PC-3 (cell line): ENCODE measurements at regions of chr2 and their contacts with region 1.

Region 1: DNA sequence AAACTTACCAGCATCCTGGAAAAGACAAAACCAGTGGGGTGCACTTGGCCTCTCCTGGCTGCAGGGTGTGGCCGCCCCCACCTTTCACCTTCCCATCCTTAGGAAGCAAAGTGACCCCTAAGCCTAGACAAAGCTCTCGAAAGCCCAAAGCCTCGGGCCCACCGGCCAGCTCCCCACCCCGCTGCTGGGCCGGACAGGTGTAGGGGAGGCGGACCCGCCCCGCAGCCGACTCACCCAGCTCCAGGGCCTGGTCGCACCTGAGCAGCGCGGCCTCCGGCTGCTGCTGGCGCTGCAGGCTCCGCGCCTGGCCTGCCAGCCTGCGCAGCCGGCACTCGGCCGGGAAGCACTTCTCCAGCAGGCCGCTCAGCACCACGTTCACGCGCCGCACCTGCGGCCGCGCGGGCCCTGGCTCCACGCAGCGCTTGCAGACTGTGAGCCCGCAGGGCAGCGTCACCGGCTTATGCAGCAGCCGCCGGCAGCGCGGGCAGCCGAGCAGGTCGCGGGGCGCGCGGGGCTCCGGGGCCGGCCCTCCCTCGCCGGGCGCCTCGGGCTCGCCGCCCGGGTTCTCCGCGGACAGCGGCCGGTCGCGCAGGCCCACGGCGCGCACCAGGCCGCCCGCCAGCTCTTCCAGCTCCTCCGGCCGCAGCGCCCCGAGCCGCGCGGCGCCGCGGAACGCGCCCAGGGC is 978 bp downstream of the LONRF2 start:
- DNase-seq: peak; percentile 55
- ATAC-seq: peak; percentile 67
- H3K4me3 ChIP-seq: peak overlapping the region; percentile 68
- H3K27ac ChIP-seq: no peak overlapping the region
- H3K4me1 ChIP-seq: no peaks in the 10 kb centered on the region; the same call in 1 of the 2 replicates
- H3K27me3 ChIP-seq: peaks cover 57% of the 10 kb centered on the region
- CTCF ChIP-seq: peak; percentile 36

Region 2: DNA sequence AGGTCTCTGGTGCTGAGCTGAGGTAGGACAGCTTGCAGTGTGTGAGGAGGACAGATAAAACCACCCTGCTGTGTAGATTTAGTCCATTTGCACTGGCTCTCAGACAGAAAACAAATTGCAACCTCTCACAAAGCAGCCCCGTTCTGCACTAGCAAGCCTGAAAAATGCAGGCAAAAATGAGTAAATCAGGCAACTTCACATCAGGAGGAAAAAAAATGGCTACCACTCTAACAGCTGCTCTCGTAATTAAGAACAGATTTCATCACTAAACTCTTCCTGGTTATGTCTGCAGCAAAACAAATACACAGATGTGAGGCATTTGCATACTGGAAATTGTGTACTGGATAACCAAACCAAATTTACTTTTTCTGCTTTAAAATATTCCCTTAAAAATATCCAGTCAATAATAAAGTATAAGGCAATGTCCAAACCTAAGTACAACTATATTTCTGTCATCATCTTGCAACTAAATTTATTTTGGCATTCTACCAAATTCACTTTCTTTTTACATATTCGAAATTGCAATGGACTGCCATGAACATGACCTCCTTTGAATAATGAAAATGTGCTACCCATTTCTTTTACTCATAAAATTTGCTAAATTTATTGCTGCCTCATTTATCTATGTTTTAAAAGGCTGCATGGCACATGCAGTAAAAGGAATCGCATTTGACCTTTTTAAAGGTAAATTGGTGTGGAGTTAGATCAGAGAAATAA is 336.4 kb before region 1 on chr2:
- CTCF ChIA-PET with region 1: no interaction called
- POLR2A ChIA-PET with region 1: no interaction called
- intact Hi-C with region 1: no loop called
- DNase-seq: no peak
- ATAC-seq: no peak
- H3K4me3 ChIP-seq: no peak overlapping the region
- H3K27ac ChIP-seq: no peak overlapping the region
- H3K4me1 ChIP-seq: no peaks in the 10 kb centered on the region
- H3K27me3 ChIP-seq: no peaks in the 10 kb centered on the region
- CTCF ChIP-seq: no peak

Region 3: GRCh38 chr2:100193291-100193710 is 128.0 kb before region 1 on chr2:
- CTCF ChIA-PET with region 1: no interaction called
- POLR2A ChIA-PET with region 1: no interaction called
- intact Hi-C with region 1: no loop called
- DNase-seq: peak; percentile 86
- ATAC-seq: peak; percentile 72
- H3K4me3 ChIP-seq: no peak overlapping the region
- H3K27ac ChIP-seq: peak overlapping the region; percentile 86
- H3K4me1 ChIP-seq: peaks cover 33% of the 10 kb centered on the region
- H3K27me3 ChIP-seq: no peaks in the 10 kb centered on the region
- CTCF ChIP-seq: no peak

Region 4: DNA sequence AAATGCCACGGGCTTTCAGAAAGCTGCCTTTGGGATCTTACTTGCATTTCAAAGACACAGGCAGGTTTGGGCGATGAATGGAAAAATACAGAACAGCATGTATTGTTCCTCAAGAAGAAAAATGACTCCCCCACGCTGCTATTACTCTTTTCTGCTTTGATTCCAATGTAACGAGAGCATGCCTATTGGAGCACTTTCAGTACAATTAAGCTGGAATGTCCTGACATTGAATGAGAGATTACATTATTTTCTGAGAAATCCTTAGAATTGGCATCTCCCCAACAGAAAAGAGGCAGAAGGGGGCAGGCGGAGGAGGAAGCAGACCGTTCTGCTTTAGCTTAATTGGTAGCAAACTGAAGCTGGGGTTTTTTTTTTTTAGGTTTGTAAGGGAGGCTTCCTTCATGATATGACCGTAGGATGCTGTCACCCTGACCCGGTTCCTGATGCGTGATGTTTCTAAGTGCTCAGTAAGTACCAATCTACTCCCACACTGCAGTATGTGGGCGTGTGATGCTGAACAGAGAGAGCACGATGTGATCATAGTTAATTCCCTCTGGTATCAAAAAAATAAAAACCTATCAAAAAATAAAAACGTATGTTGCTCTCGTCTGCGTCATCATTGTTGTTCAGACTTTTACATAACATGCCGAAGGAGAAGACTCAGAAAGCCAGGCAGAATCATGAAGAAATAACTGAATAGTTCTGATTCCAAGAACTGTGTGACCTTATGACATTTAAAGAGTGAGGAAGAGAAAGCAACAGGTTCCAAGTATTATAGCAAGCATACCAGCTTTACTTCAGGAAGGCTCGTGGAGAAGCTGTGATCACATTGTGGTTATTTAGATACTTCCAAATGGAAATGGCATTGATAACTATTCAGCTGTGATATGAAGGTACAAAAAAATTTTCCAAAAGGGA is 39.5 kb before region 1 on chr2:
- CTCF ChIA-PET with region 1: no interaction called
- POLR2A ChIA-PET with region 1: no interaction called
- intact Hi-C with region 1: loop called (anchors 5 kb)
- DNase-seq: no peak
- ATAC-seq: no peak
- H3K4me3 ChIP-seq: no peak overlapping the region
- H3K27ac ChIP-seq: no peak overlapping the region
- H3K4me1 ChIP-seq: peaks cover 14% of the 10 kb centered on the region
- H3K27me3 ChIP-seq: no peaks in the 10 kb centered on the region
- CTCF ChIP-seq: no peak